CD4-positive, alpha-beta T cell (primary cell): ENCODE measurements at regions of chr12 and their contacts with region 1.

Region 1: GRCh38 chr12:57546438-57547383 is at the start of gene DCTN2:
- DNase-seq: peak; percentile 81 to 97 (median 88)
- ATAC-seq: peak; percentile 95
- H3K4me3 ChIP-seq: peak within 1 kb of the TSS; percentile 74
- H3K4me3 Mint-ChIP-seq: peak within 1 kb of the TSS; percentile 100
- H3K27ac ChIP-seq: peak within 1 kb of the TSS; percentile 63 to 77
- H3K27ac Mint-ChIP-seq: peak within 1 kb of the TSS; percentile 86
- H3K4me1 ChIP-seq: peaks cover 35% of the 10 kb centered on the region
- H3K4me1 Mint-ChIP-seq: peaks cover 51% of the 10 kb centered on the region
- H3K27me3 ChIP-seq: peaks cover 4 to 8% of the 10 kb centered on the region in 2 experiments
- H3K27me3 Mint-ChIP-seq: peaks cover 4% of the 10 kb centered on the region
- CTCF ChIP-seq: no peak
- total RNA-seq, gene DCTN2: 39.6 TPM

Region 2: DNA sequence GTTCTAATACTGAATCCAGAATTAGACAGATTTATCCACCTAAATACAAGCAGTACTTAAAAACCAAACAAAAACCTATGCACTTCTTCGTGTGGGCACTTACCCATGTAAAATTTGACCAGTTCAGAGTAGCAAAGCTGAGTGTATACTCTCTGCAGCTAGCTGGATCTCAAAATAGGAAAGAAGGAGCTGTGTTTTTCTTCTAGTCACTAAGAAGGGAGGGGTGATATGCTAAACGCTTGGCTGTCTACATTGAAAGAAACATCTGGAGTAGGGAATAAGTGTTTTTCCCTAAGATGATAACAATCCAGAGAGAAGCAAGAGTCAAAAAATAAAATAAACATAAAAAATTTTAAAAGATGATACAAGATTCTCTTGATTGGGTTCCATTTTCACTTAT is 1005.1 kb before region 1 on chr12:
- CTCF ChIA-PET with region 1: no interaction called
- POLR2A ChIA-PET with region 1: no interaction called
- intact Hi-C with region 1: loop called in 1 of 2 experiments (anchors 10 kb)
- DNase-seq: no peak
- ATAC-seq: no peak
- H3K4me3 ChIP-seq: no peak overlapping the region
- H3K4me3 Mint-ChIP-seq: no peak overlapping the region
- H3K27ac ChIP-seq: no peak overlapping the region
- H3K27ac Mint-ChIP-seq: no peak overlapping the region
- H3K4me1 ChIP-seq: no peaks in the 10 kb centered on the region
- H3K4me1 Mint-ChIP-seq: no peaks in the 10 kb centered on the region
- H3K27me3 ChIP-seq: no peaks in the 10 kb centered on the region
- H3K27me3 Mint-ChIP-seq: no peaks in the 10 kb centered on the region
- CTCF ChIP-seq: no peak

Region 3: DNA sequence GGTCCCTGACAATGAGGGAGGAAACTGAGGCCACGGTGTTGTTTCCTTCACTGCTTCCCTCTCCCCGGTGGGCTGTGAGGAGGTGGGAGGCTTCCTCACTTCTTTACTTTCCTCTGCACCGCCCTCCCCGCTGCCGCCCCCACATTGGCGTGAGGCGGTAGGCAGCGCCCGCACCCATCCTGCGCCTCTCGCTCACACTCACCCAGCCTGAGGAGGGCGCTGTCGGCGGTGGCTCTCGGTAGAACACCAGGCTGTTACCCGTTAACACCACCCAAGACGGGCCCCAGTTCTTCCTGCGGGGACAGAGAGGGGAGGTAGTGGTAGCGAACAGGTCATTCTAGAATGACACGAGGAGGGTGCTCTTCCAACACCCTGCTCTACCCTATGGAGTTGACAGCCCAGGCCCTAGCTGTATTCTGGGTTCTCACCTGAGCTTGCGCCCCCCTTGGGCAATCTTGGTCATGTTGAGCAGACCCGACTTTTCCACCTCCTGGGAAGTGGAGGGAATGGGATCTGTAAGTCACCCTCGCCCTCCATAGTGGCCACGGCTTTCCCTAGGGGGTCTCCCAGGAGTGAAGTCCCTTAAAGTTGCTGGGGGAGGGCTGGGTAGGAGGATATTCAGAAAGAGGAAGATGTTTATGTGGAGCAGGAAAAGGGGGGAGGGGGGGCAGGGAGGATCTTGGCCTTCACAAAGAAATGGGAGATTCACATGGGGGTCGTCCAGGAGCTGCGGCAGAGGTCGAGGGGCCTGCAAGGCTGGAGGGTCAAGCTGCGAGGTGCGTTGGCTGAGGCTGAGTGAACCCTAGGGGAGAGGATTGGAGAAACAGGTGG is 70.3 kb before region 1 on chr12:
- CTCF ChIA-PET with region 1: interaction called, 3 read pairs
- POLR2A ChIA-PET with region 1: interaction called, 7 read pairs
- intact Hi-C with region 1: loop called in 1 of 2 experiments (anchors 5 kb)
- DNase-seq: peak; percentile 52 to 84 (median 64)
- ATAC-seq: peak; percentile 31
- H3K4me3 ChIP-seq: peak overlapping the region; percentile 90
- H3K4me3 Mint-ChIP-seq: peak overlapping the region; percentile 93
- H3K27ac ChIP-seq: peak overlapping the region; percentile 99
- H3K27ac Mint-ChIP-seq: peak overlapping the region; percentile 99
- H3K4me1 ChIP-seq: peaks cover 84% of the 10 kb centered on the region
- H3K4me1 Mint-ChIP-seq: peaks cover 89% of the 10 kb centered on the region
- H3K27me3 ChIP-seq: no peaks in the 10 kb centered on the region
- H3K27me3 Mint-ChIP-seq: no peaks in the 10 kb centered on the region
- CTCF ChIP-seq: peak; percentile 63

Region 4: GRCh38 chr12:57487597-57488401 is 58.9 kb before region 1 on chr12 and contains the start of gene MARS1:
- CTCF ChIA-PET with region 1: no interaction called
- POLR2A ChIA-PET with region 1: no interaction called
- intact Hi-C with region 1: loop called (anchors 2 to 5 kb)
- DNase-seq: peak; percentile 80 to 98 (median 88)
- ATAC-seq: peak; percentile 96
- H3K4me3 ChIP-seq: peak within 1 kb of the TSS; percentile 98
- H3K4me3 Mint-ChIP-seq: peak within 1 kb of the TSS; percentile 98
- H3K27ac ChIP-seq: peak within 1 kb of the TSS; percentile 80 to 86
- H3K27ac Mint-ChIP-seq: peak within 1 kb of the TSS; percentile 90
- H3K4me1 ChIP-seq: peaks cover 26% of the 10 kb centered on the region
- H3K4me1 Mint-ChIP-seq: peaks cover 40% of the 10 kb centered on the region
- H3K27me3 ChIP-seq: no peaks in the 10 kb centered on the region
- H3K27me3 Mint-ChIP-seq: no peaks in the 10 kb centered on the region
- CTCF ChIP-seq: no peak
- total RNA-seq, gene MARS1: 203 to 204 TPM

Region 5: DNA sequence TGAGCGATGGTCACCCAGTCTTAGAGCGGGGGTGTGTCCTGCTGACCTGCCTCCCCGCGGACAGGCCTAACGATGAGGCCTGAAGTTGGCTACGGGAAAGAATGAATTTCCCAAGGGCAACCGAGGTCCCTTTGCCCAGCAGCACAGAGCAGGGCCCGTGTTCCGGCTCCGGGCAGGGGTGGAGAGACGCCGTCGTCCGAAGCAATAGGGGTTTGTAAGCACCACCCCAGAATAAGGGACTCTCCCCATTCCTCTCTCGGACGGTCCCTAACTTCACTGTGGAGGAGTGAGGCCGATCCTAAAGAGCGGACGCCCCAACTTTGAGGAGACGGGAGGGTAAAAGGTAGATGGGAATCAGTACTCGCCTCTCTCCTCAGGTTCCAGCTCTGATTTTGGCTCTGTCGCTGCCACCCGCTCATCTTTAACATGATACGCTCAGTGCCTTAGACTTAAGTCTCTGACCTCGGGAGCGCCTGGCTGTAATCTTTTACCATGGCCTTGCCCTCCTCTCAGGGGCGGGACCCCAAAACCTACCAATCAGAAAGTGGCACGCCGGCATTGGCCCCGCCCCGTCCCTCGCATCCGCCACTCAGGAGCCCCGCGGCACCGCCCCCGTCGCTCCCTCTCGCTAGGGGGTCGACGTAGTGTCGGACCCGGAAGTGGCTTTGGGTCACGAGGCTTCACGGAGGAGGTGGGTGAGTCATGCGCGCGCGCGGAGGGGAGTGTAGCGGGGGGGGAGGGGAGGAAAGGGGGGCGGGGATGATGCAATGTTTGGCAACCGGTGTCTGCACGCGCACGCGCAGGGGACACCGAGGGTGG is 26.4 kb before region 1 on chr12 and contains the start of gene DDIT3:
- CTCF ChIA-PET with region 1: interaction called, 3 read pairs
- POLR2A ChIA-PET with region 1: interaction called, 11 read pairs
- intact Hi-C with region 1: loop called (anchors 1 to 2 kb)
- DNase-seq: peak; percentile 98 to 100 (median 99)
- ATAC-seq: peak; percentile 78
- H3K4me3 ChIP-seq: peak within 1 kb of the TSS; percentile 100
- H3K4me3 Mint-ChIP-seq: peak within 1 kb of the TSS; percentile 95
- H3K27ac ChIP-seq: peak within 1 kb of the TSS; percentile 97 to 99
- H3K27ac Mint-ChIP-seq: peak within 1 kb of the TSS; percentile 100
- H3K4me1 ChIP-seq: peaks cover 67% of the 10 kb centered on the region
- H3K4me1 Mint-ChIP-seq: peaks cover 64% of the 10 kb centered on the region
- H3K27me3 ChIP-seq: no peaks in the 10 kb centered on the region
- H3K27me3 Mint-ChIP-seq: no peaks in the 10 kb centered on the region
- CTCF ChIP-seq: no peak
- total RNA-seq, gene DDIT3: 145 TPM

Region 6: GRCh38 chr12:57590536-57591479 is 44.1 kb after region 1 on chr12 and contains the start of gene PIP4K2C:
- CTCF ChIA-PET with region 1: no interaction called
- POLR2A ChIA-PET with region 1: interaction called, 3 read pairs
- intact Hi-C with region 1: loop called in 1 of 2 experiments (anchors 2 kb)
- DNase-seq: peak; percentile 49 to 92 (median 70)
- ATAC-seq: peak; percentile 75
- H3K4me3 ChIP-seq: peak within 1 kb of the TSS; percentile 99
- H3K4me3 Mint-ChIP-seq: peak within 1 kb of the TSS; percentile 91
- H3K27ac ChIP-seq: peak within 1 kb of the TSS; percentile 67 to 73
- H3K27ac Mint-ChIP-seq: peak within 1 kb of the TSS; percentile 84
- H3K4me1 ChIP-seq: peaks cover 30% of the 10 kb centered on the region
- H3K4me1 Mint-ChIP-seq: peaks cover 39% of the 10 kb centered on the region
- H3K27me3 ChIP-seq: peaks cover 0 to 10% of the 10 kb centered on the region in 2 experiments
- H3K27me3 Mint-ChIP-seq: no peaks in the 10 kb centered on the region
- CTCF ChIP-seq: no peak
- total RNA-seq, gene PIP4K2C: 15.1 to 17.3 TPM